ENCODE measurements at regions of chr12 and their contacts with region 1.

Region 1: DNA sequence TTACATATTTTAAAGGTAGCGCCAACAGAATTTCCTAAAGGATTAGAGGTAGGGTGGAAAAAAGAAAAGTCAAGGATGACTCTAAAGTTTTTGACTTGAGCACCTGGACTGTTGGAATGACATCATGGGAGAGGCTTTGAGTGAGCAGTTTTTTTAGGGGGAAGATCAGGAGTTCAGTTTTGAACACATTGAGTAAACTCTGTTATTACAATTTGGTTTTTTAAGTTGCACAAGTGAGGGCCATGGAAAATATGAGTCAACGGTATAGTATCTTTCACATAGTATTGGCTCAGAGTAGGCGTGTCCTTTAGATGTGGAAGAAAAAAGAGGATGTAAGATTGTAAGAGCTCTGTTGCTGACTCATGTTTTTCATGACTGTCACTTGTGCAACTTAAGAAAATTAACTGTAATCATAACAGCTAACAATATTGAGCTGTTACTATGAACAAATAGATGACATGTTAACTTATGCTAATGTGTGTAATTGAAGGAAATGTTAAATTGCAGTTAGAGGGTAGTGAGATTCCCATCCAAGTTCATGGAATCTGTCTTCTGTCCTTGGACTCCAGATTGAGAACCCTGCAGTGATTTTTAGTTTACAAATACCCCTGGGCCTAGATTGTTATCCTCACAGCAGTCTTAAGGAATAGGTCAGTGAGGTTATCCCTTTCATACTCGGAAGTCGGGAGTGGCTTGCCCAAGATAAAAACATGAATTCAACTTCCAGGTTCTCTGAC is 48.1 kb upstream of the ATP2B1 start:
- H3K4me3 Mint-ChIP-seq: peak overlapping the region; percentile 14
- H3K27ac Mint-ChIP-seq: peak overlapping the region; percentile 95
- H3K4me1 Mint-ChIP-seq: peaks cover 43% of the 10 kb centered on the region
- H3K27me3 Mint-ChIP-seq: no peaks in the 10 kb centered on the region

Region 2: GRCh38 chr12:89610366-89610765 is 146.4 kb before region 1 on chr12:
- intact Hi-C with region 1: no loop called
- H3K4me3 Mint-ChIP-seq: no peak overlapping the region
- H3K27ac Mint-ChIP-seq: no peak overlapping the region
- H3K4me1 Mint-ChIP-seq: no peaks in the 10 kb centered on the region
- H3K27me3 Mint-ChIP-seq: no peaks in the 10 kb centered on the region

Region 3: GRCh38 chr12:89709157-89709994 is 47.4 kb before region 1 on chr12:
- intact Hi-C with region 1: loop called (anchors 1 kb)
- H3K4me3 Mint-ChIP-seq: peak overlapping the region; percentile 82
- H3K27ac Mint-ChIP-seq: peak overlapping the region; percentile 100
- H3K4me1 Mint-ChIP-seq: peaks cover 15% of the 10 kb centered on the region
- H3K27me3 Mint-ChIP-seq: no peaks in the 10 kb centered on the region

Region 4: GRCh38 chr12:89789862-89790261 is 33.1 kb after region 1 on chr12:
- intact Hi-C with region 1: no loop called
- H3K4me3 Mint-ChIP-seq: no peak overlapping the region
- H3K27ac Mint-ChIP-seq: peak overlapping the region; percentile 75
- H3K4me1 Mint-ChIP-seq: peaks cover 32% of the 10 kb centered on the region
- H3K27me3 Mint-ChIP-seq: no peaks in the 10 kb centered on the region

Measured in dendritic cell treated with granulocyte-macrophage colony-stimulating factor and Interleukin-4, amounts not matched to agents 40 ng/mL and 50 ng/mL, for 4 days (primary cell).